Activated naive CD4-positive, alpha-beta T cell treated with anti-CD3 and anti-CD28 coated beads for 36 hours (primary cell): ENCODE measurements at regions of chr3 and their contacts with region 1.

Region 1: DNA sequence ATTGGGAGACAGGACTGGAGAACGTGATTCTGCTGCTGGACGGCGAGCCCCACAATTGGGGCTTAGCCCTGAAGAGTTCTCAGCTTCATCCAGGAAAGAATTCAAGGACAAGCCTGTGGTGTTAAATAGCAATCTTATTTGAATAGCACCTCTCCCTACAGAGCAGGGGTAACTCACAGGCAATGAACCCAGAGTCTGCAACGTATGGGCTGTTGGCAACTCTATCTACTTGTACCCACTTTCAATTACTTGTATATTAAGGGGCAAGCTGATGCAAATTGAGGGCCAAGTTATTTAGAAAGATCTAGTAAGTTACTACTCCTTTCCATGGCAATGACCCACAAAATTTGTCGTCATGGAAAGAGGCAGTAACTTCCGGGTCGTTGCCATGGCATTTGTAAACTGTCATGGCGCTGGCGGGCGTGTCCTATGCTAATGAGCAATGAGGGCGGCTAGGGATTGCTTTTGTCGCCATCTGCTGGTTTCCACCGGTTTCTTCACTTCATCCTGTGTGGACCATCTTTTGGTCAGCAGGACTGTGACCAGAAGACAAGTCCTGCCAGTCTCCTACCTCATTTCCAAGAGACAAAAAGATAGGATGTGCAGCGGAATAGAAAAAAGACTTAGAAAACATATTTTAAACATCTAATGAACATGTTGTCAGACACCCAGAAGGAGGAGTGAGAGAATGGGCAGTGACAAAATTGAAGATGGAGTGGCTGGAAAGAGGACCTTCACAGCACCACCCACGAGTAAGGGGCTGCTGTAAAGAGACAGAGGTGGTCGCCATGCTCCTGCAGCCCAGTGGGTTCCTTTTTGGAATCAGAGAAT is 45.8 kb upstream of the SH3BP5 start:
- DNase-seq: peak; percentile 97
- H3K4me3 Mint-ChIP-seq: no peak overlapping the region
- H3K27ac Mint-ChIP-seq: peak overlapping the region; percentile 24
- H3K4me1 Mint-ChIP-seq: peaks cover 5% of the 10 kb centered on the region
- H3K27me3 Mint-ChIP-seq: no peaks in the 10 kb centered on the region

Region 2: GRCh38 chr3:15241341-15241740 is 136.8 kb before region 1 on chr3:
- CTCF ChIA-PET with region 1: no interaction called
- intact Hi-C with region 1: loop called (anchors 1 kb)
- DNase-seq: peak; percentile 69
- H3K4me3 Mint-ChIP-seq: no peak overlapping the region
- H3K27ac Mint-ChIP-seq: no peak overlapping the region
- H3K4me1 Mint-ChIP-seq: peaks cover 3% of the 10 kb centered on the region
- H3K27me3 Mint-ChIP-seq: no peaks in the 10 kb centered on the region

Region 3: GRCh38 chr3:15309662-15310335 is 68.4 kb before region 1 on chr3:
- CTCF ChIA-PET with region 1: no interaction called
- intact Hi-C with region 1: loop called (anchors 1 kb)
- DNase-seq: peak; percentile 76
- H3K4me3 Mint-ChIP-seq: no peak overlapping the region
- H3K27ac Mint-ChIP-seq: peak overlapping the region; percentile 95
- H3K4me1 Mint-ChIP-seq: peaks cover 66% of the 10 kb centered on the region
- H3K27me3 Mint-ChIP-seq: no peaks in the 10 kb centered on the region

Region 4: DNA sequence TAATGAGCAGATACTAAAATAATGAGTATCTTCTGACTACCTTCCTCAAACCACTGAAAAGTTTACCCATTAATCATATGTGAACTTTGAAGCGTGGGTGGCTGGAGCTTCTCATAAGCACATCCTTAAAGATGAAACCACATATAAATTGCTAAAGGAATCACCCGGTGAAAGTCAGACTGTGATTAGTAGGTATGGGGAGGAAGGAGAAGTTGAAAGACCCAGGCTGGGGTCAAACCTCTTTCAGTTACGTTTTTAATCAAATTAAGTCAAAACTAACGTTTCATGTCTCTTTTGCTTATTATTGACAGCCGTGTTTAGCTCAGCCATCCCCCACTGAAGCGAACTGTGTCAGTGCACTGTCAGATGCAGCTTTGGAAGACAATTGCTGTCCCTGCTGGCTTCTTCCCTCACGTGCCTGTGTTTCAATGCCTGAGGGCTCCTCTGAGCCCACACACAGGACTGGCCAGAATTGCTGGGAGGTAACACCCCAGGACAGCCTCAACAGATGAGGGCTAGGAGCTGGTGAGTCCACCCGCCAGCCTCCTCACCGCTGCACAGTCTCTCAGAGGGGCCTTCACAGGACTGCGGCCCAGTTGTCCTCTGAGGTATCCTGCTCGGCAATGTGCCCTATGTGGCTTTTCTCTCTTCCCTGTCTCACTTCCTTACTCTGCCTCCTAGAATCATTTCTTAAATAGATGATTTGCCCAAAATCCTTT is 16.5 kb before region 1 on chr3:
- CTCF ChIA-PET with region 1: interaction called, 8 read pairs
- intact Hi-C with region 1: loop called (anchors 1 kb)
- DNase-seq: peak; percentile 86
- H3K4me3 Mint-ChIP-seq: no peak overlapping the region
- H3K27ac Mint-ChIP-seq: peak overlapping the region; percentile 83
- H3K4me1 Mint-ChIP-seq: peaks cover 42% of the 10 kb centered on the region
- H3K27me3 Mint-ChIP-seq: peaks cover 2% of the 10 kb centered on the region

Region 5: GRCh38 chr3:15557511-15557946 is 179.4 kb after region 1 on chr3:
- CTCF ChIA-PET with region 1: interaction called, 3 read pairs
- intact Hi-C with region 1: loop called (anchors 1 kb)
- DNase-seq: peak; percentile 77
- H3K4me3 Mint-ChIP-seq: no peak overlapping the region
- H3K27ac Mint-ChIP-seq: no peak overlapping the region
- H3K4me1 Mint-ChIP-seq: peaks cover 16% of the 10 kb centered on the region
- H3K27me3 Mint-ChIP-seq: no peaks in the 10 kb centered on the region

Region 6: GRCh38 chr3:15923640-15924405 is 545.6 kb after region 1 on chr3:
- CTCF ChIA-PET with region 1: no interaction called
- intact Hi-C with region 1: no loop called
- DNase-seq: no peak
- H3K4me3 Mint-ChIP-seq: no peak overlapping the region
- H3K27ac Mint-ChIP-seq: no peak overlapping the region
- H3K4me1 Mint-ChIP-seq: no peaks in the 10 kb centered on the region
- H3K27me3 Mint-ChIP-seq: no peaks in the 10 kb centered on the region